OCI-LY7 (cell line): ENCODE measurements at regions of chr7 and their contacts with region 1.

Region 1: DNA sequence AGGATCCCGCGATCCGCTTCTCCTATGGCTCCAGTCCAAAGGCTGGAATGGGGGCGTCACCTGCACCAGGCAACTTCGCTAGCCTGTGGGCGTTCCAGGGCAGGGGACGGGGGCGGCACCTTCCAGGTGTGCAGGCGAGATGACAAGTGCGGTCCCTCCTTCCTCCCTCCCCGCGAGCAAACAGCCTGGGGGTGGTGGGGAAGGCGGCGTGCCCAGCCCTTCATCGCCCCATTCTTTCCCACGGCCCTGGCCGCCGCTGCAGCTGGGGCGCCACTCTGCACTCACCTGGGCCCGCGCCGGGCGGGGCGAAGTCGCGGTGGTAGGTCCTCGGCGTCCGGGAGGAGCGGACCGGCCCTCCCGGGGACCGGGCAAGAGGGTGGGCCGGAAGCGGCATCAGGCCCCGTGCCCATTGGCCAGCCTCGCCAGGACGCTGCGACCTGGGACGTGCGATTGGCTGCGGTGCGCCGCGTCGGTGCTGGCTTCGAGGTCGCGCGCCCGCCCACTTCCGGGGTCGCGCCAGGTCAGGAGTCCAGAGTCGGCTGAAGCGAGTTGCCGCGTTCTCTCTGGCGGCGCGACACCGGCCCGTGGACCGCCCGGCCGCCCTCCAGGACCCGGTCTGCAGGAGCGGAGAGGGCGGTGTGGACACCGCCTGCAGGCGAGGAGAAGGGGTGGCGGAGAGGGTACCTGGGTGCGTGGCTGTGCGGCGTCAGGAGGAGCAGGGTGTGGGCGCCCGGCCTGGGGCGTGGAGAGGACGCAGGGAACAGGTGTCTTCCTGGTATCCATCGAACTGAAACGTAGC is at the start of gene TECPR1:
- DNase-seq: peak; percentile 93
- H3K4me3 ChIP-seq: peak within 1 kb of the TSS; percentile 86
- H3K27ac ChIP-seq: peak within 1 kb of the TSS; percentile 83
- H3K4me1 ChIP-seq: peaks cover 32% of the 10 kb centered on the region
- CTCF ChIP-seq: no peak
- total RNA-seq, gene TECPR1: 17.9 and 23.2 TPM in 2 replicates

Region 2: DNA sequence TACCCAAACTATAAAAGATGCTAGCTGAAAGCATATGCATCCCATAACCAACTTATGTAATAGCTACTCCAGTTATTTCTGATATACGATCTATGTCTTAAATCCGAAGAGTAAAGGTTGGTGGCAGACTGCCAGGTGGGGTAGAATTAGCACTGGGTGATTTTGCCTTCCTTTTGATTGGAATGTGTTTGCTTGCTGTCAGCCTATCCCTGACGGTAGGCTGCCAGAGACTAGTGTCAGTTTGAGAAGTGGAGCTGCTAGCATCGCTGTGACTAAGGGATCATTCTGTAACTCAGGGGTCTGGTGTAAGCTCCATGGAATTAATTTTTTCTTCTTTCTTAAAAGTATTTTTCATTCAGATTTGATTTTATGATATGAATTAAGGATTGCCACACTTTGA is 1532.9 kb before region 1 on chr7:
- CTCF ChIA-PET with region 1: no interaction called
- POLR2A ChIA-PET with region 1: no interaction called
- intact Hi-C with region 1: no loop called
- DNase-seq: no peak
- H3K4me3 ChIP-seq: no peak overlapping the region
- H3K27ac ChIP-seq: no peak overlapping the region
- H3K4me1 ChIP-seq: no peaks in the 10 kb centered on the region
- CTCF ChIP-seq: no peak

Region 3: GRCh38 chr7:97117372-97118188 is 1134.5 kb before region 1 on chr7 and contains the start of gene SDHAF3:
- CTCF ChIA-PET with region 1: no interaction called
- POLR2A ChIA-PET with region 1: no interaction called
- intact Hi-C with region 1: loop called (anchors 5 kb)
- DNase-seq: peak; percentile 99
- H3K4me3 ChIP-seq: peak within 1 kb of the TSS; percentile 78
- H3K27ac ChIP-seq: peak within 1 kb of the TSS; percentile 76
- H3K4me1 ChIP-seq: peaks cover 28% of the 10 kb centered on the region
- CTCF ChIP-seq: peak; percentile 25; the same call in 1 of the 2 replicates
- total RNA-seq, gene SDHAF3: 9.9 and 27.9 TPM in 2 replicates

Region 4: GRCh38 chr7:97971990-97972943 is 279.8 kb before region 1 on chr7:
- CTCF ChIA-PET with region 1: no interaction called
- POLR2A ChIA-PET with region 1: no interaction called
- intact Hi-C with region 1: loop called (anchors 5 kb)
- DNase-seq: peak; percentile 88
- H3K4me3 ChIP-seq: peak overlapping the region; percentile 94
- H3K27ac ChIP-seq: peak overlapping the region; percentile 65
- H3K4me1 ChIP-seq: peaks cover 12% of the 10 kb centered on the region
- CTCF ChIP-seq: peak; percentile 71

Region 5: GRCh38 chr7:98280791-98281756 is 29.0 kb after region 1 on chr7 and contains the start of gene BRI3:
- CTCF ChIA-PET with region 1: no interaction called
- POLR2A ChIA-PET with region 1: interaction called, 3 read pairs
- intact Hi-C with region 1: loop called (anchors 1 kb)
- DNase-seq: peak; percentile 93
- H3K4me3 ChIP-seq: peak within 1 kb of the TSS; percentile 77
- H3K27ac ChIP-seq: peak within 1 kb of the TSS; percentile 57
- H3K4me1 ChIP-seq: peaks cover 21% of the 10 kb centered on the region
- CTCF ChIP-seq: no peak
- total RNA-seq, gene BRI3: 18.0 and 18.4 TPM in 2 replicates